Uterus (tissue), 4 donors: ENCODE measurements at regions of chr3 and their contacts with region 1.

Region 1: DNA sequence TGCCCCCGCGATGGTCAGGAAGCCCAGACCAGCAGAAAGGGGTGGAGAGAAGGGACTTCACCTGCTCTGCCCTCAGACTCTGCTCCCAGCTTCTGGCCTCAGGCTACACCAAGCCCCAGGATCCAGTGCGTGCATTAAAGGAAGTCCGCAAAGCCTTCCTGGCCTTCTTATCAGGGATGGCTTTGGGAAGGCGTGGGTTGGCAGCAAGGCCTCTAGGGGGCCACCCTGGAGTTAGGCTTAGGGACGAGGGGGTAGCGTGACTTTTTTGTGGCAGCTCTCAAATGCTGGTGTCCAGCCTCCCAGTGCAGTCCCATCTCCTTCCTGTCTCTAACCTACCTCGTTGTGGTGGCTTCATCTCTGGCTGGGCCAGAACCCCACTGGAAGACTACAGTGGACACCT is 18.9 kb upstream of the RPL29 start:
- DNase-seq: no peak
- H3K4me3 ChIP-seq: no peak overlapping the region
- H3K27ac ChIP-seq: no peak overlapping the region
- H3K4me1 ChIP-seq: peaks cover 0 to 7% of the 10 kb centered on the region in 2 donors
- H3K27me3 ChIP-seq: no peaks in the 10 kb centered on the region
- CTCF ChIP-seq: no peak
- POLR2A ChIP-seq: no peak

Region 2: GRCh38 chr3:52119099-52119498 is 104.5 kb after region 1 on chr3:
- intact Hi-C with region 1: loop called (anchors 5 kb)
- DNase-seq: no peak
- H3K4me3 ChIP-seq: no peak overlapping the region
- H3K27ac ChIP-seq: no peak overlapping the region
- H3K4me1 ChIP-seq: no peaks in the 10 kb centered on the region
- H3K27me3 ChIP-seq: no peaks in the 10 kb centered on the region
- CTCF ChIP-seq: no peak
- POLR2A ChIP-seq: no peak